ENCODE measurements at regions of chr1 and their contacts with region 1.

Region 1: GRCh38 chr1:67766141-67766978 is 66.9 kb downstream of the GNG12 start:
- DNase-seq: peak; percentile 63
- H3K4me3 Mint-ChIP-seq: peak overlapping the region; percentile 0
- H3K27ac Mint-ChIP-seq: peak overlapping the region; percentile 57
- H3K4me1 Mint-ChIP-seq: peaks cover 17% of the 10 kb centered on the region
- H3K27me3 Mint-ChIP-seq: no peaks in the 10 kb centered on the region
- CTCF ChIP-seq: peak; percentile 84

Region 2: DNA sequence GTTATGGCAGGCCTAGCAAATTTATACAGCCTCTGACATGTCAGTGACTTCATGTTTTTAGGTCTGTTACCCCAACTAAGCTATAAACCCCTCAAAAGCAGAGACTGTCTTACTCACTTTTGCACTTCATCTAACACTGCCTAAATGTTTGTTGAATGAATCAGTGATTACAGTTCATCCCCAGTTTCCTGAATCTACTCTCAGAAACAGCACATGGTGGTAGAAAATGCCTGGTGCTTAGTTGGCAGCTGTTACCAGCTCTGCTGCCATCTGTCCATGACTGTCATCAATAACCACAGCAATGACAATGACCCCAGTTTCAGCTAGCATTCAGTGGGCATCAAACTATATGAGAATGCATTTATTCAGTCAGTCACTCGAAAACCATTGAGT is 225.6 kb before region 1 on chr1:
- CTCF ChIA-PET with region 1: interaction called, 386 read pairs
- POLR2A ChIA-PET with region 1: interaction called, 4 read pairs
- intact Hi-C with region 1: no loop called
- DNase-seq: no peak
- H3K4me3 Mint-ChIP-seq: no peak overlapping the region
- H3K27ac Mint-ChIP-seq: no peak overlapping the region
- H3K4me1 Mint-ChIP-seq: peaks cover under 1% of the 10 kb centered on the region
- H3K27me3 Mint-ChIP-seq: no peaks in the 10 kb centered on the region
- CTCF ChIP-seq: no peak

Region 3: GRCh38 chr1:67599085-67599484 is 167.3 kb before region 1 on chr1:
- CTCF ChIA-PET with region 1: no interaction called
- POLR2A ChIA-PET with region 1: no interaction called
- intact Hi-C with region 1: no loop called
- DNase-seq: no peak
- H3K4me3 Mint-ChIP-seq: no peak overlapping the region
- H3K27ac Mint-ChIP-seq: no peak overlapping the region
- H3K4me1 Mint-ChIP-seq: no peaks in the 10 kb centered on the region
- H3K27me3 Mint-ChIP-seq: no peaks in the 10 kb centered on the region
- CTCF ChIP-seq: no peak

Region 4: DNA sequence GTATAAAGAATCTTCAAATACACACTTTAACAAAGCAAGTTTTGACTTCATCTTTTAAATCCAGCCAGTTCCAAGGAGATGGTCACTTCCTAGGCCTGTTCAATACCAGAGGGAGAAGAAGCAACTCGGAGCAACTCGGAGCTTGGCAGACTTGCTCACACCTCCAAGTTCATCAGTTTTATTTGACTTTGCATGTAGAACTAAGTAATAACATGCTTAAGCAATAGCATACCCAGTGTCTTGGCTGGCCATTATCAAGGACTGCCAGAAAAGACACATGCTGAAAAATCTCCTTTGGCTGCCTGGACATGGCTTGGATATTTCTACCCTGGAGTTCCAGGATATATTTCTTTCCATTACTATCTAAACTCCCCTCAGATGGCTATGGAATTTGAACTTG is 14.3 kb after region 1 on chr1:
- CTCF ChIA-PET with region 1: interaction called, 28 read pairs
- POLR2A ChIA-PET with region 1: interaction called, 3 read pairs
- intact Hi-C with region 1: no loop called
- DNase-seq: no peak
- H3K4me3 Mint-ChIP-seq: no peak overlapping the region
- H3K27ac Mint-ChIP-seq: no peak overlapping the region
- H3K4me1 Mint-ChIP-seq: peaks cover 12% of the 10 kb centered on the region
- H3K27me3 Mint-ChIP-seq: no peaks in the 10 kb centered on the region
- CTCF ChIP-seq: no peak

Region 5: DNA sequence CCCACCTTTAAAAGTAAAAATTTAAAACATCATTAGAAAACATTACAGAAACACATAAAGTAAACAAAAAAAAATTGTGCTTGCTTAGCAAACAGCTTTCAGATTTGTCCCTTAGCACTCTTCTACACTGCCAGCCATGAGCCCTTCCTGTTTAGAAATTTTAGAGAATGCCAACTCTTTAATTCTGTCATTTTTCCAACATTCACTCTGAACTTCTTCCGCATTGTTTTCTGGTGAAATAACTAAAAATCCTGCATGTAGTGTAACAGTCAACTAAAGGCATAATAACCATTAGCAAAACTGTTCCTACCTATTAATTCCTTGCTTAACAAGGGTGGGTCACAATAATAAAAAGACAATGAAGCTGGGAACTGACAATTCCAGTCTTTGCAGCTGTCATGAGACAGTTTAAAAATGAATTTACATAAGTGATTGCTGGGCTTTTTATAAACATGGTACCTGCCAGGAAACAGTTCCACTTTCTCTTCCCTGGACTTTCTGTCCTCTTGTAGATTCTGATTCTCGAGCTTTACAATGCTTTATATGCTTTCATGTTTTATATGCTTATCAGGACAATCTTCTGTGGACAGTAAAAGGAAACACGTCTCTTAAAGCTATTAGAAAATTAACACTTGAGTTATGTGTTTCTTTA is 47.9 kb after region 1 on chr1:
- CTCF ChIA-PET with region 1: interaction called, 53 read pairs
- POLR2A ChIA-PET with region 1: interaction called, 4 read pairs
- intact Hi-C with region 1: no loop called
- DNase-seq: no peak
- H3K4me3 Mint-ChIP-seq: no peak overlapping the region
- H3K27ac Mint-ChIP-seq: peak overlapping the region; percentile 94
- H3K4me1 Mint-ChIP-seq: peaks cover 54% of the 10 kb centered on the region
- H3K27me3 Mint-ChIP-seq: no peaks in the 10 kb centered on the region
- CTCF ChIP-seq: no peak

Region 6: GRCh38 chr1:67840449-67840848 is 74.1 kb after region 1 on chr1:
- CTCF ChIA-PET with region 1: interaction called, 174 read pairs
- POLR2A ChIA-PET with region 1: interaction called, 12 read pairs
- intact Hi-C with region 1: no loop called
- DNase-seq: peak; percentile 31
- H3K4me3 Mint-ChIP-seq: no peak overlapping the region
- H3K27ac Mint-ChIP-seq: peak overlapping the region; percentile 17
- H3K4me1 Mint-ChIP-seq: peaks cover 37% of the 10 kb centered on the region
- H3K27me3 Mint-ChIP-seq: no peaks in the 10 kb centered on the region
- CTCF ChIP-seq: no peak

Region 7: DNA sequence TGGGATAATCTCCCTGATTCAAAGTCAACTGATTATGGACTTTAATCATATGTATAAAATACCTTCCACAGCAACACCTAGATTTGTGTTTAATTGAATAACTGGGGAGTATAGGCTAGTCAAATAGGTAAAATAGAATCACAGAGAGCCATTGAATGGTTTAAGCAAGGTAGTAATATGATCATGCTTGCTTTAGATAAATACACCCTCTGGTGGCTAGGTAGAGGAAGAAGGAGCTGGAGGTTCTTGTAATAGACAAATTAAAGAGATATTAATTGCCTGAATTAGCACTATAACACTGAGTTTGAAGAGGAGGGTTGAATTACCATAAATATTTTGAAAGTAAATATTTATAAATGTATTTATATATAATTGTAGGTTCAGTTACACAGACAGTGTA is 243.7 kb after region 1 on chr1:
- CTCF ChIA-PET with region 1: interaction called, 16 read pairs
- POLR2A ChIA-PET with region 1: interaction called, 4 read pairs
- intact Hi-C with region 1: loop called (anchors 1 kb)
- DNase-seq: peak; percentile 40
- H3K4me3 Mint-ChIP-seq: no peak overlapping the region
- H3K27ac Mint-ChIP-seq: no peak overlapping the region
- H3K4me1 Mint-ChIP-seq: no peaks in the 10 kb centered on the region
- H3K27me3 Mint-ChIP-seq: no peaks in the 10 kb centered on the region
- CTCF ChIP-seq: peak; percentile 34

Region 8: DNA sequence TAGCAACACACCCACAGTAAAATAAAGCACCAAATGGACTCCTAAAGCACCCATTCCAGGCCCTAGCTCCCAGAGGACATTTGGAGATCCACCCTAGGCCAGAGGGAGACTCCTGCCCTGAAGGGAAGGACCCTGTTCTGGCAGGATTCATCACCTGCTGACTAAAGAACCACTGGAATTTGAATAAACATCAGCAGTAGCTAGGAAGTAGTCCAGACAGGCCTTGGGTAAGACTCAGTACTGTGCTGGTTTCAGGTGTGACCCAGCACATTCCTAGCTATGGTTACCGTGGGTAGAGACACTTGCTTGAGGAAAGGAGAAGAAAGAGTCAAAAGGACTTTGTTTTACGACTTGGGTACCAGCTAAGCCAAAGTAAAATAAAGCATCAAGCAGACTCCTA is 1708.7 kb after region 1 on chr1:
- CTCF ChIA-PET with region 1: no interaction called
- POLR2A ChIA-PET with region 1: no interaction called
- intact Hi-C with region 1: no loop called
- DNase-seq: no peak
- H3K4me3 Mint-ChIP-seq: no peak overlapping the region
- H3K27ac Mint-ChIP-seq: no peak overlapping the region
- H3K4me1 Mint-ChIP-seq: no peaks in the 10 kb centered on the region
- H3K27me3 Mint-ChIP-seq: no peaks in the 10 kb centered on the region
- CTCF ChIP-seq: no peak